ENCODE measurements at regions of chr4 and their contacts with region 1.

Region 1: DNA sequence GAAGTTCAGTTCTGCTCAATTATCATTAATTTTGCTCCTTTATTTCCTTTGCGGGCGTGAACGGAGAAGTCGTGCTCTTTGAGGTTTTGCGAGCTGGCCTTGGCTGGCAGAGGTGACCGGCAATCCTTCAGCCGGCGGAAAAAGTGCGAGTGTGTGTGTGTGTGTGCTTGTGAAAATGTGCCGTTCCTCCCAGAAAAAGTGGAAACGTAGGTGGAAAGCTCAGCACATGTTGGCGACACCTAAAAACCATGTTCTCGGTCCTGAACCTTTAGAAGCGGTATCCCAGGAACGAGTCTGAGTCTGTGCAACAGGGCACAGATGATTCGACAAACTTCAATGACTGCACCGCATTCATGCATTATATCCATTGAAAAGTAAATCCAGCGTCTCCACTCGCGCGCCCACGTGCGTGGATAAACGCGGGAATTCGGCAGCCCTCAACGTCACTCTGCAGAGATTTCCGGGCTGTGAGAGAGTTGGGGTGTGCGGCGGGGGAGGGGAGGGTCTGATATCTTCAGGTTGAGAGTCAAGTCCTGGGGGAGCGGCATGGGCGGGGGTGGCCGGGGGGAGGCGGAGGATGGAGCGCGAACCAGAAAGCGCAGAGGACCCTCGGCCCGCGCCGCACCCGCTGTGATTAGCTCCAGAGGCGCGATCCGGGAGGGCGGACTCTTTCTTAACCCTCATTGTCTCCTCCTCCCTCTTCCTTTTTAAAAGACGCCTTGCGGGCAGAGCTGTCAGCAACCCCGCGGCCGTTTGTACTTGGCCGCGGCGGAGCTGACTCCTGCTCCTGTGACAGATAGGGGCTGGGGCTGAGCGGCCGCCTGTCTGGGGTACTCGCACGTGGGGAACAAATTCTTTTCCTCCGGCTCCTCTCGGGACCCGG is at the start of gene SHISA3:
- DNase-seq: no peak
- ATAC-seq: peak; percentile 52
- H3K4me3 ChIP-seq: peak within 1 kb of the TSS; percentile 83
- H3K27ac ChIP-seq: no peak within 1 kb of the TSS
- H3K4me1 ChIP-seq: peaks cover 16% of the 10 kb centered on the region
- H3K27me3 ChIP-seq: peaks cover 2 to 10% of the 10 kb centered on the region in 2 experiments
- CTCF ChIP-seq: no peak
- EP300 ChIP-seq: no peak
- POLR2A ChIP-seq: no peak
- RAD21 ChIP-seq: no peak
- polyA plus RNA-seq, gene SHISA3: 1.9 to 4.6 TPM

Region 2: GRCh38 chr4:42425146-42426065 is 28.4 kb after region 1 on chr4:
- CTCF ChIA-PET with region 1: no interaction called
- POLR2A ChIA-PET with region 1: no interaction called
- RAD21 ChIA-PET with region 1: no interaction called
- SMC1A ChIA-PET with region 1: no interaction called
- in situ Hi-C with region 1: no loop called
- intact Hi-C with region 1: no loop called
- DNase-seq: no peak
- ATAC-seq: no peak
- H3K4me3 ChIP-seq: no peak overlapping the region
- H3K27ac ChIP-seq: no peak overlapping the region
- H3K4me1 ChIP-seq: no peaks in the 10 kb centered on the region
- H3K27me3 ChIP-seq: no peaks in the 10 kb centered on the region
- CTCF ChIP-seq: no peak
- EP300 ChIP-seq: no peak
- POLR2A ChIP-seq: no peak
- RAD21 ChIP-seq: no peak

Region 3: DNA sequence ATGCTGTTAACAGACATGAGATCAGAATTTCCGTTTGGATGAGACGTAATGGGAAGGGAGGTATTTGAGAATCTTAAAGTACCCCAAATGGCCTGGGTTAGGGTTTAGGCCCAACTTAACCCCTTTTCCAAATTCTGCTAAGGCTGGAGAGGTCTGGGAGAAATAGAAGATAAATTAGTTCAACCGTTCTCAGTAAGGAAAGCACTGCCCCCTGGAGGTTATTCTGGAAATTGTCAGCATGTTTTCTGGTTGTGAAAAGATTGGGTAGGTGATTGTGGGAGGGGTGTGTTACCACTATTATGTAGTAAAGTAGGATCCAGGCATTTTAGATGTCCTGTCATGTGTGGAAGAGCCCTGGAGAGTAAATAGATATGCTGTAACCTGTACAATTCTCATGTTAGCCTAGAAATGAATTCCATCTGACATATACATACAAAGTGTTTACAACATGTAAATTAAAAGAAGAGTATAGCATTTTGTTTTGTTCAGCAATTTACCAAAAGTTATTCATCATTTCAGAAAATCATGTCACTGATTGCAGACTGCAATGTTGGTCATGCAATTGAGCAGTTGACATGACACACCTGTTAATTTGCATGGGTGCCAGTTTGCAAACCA is 468.7 kb after region 1 on chr4:
- CTCF ChIA-PET with region 1: no interaction called
- POLR2A ChIA-PET with region 1: no interaction called
- RAD21 ChIA-PET with region 1: no interaction called
- SMC1A ChIA-PET with region 1: no interaction called
- in situ Hi-C with region 1: no loop called
- intact Hi-C with region 1: loop called (anchors 10 kb)
- DNase-seq: no peak
- ATAC-seq: peak; percentile 85
- H3K4me3 ChIP-seq: no peak overlapping the region
- H3K27ac ChIP-seq: no peak overlapping the region
- H3K4me1 ChIP-seq: no peaks in the 10 kb centered on the region
- H3K27me3 ChIP-seq: no peaks in the 10 kb centered on the region
- CTCF ChIP-seq: peak; percentile 65 to 72 (median 68)
- EP300 ChIP-seq: no peak
- POLR2A ChIP-seq: no peak
- RAD21 ChIP-seq: peak; percentile 89